Activated CD8-positive, alpha-beta memory T cell treated with anti-CD3 and anti-CD28 coated beads, Interleukin-2, amount 10 ng/mL, durations not matched to agents 7 days and 5 days (primary cell): ENCODE measurements at regions of chr2 and their contacts with region 1.

Region 1: DNA sequence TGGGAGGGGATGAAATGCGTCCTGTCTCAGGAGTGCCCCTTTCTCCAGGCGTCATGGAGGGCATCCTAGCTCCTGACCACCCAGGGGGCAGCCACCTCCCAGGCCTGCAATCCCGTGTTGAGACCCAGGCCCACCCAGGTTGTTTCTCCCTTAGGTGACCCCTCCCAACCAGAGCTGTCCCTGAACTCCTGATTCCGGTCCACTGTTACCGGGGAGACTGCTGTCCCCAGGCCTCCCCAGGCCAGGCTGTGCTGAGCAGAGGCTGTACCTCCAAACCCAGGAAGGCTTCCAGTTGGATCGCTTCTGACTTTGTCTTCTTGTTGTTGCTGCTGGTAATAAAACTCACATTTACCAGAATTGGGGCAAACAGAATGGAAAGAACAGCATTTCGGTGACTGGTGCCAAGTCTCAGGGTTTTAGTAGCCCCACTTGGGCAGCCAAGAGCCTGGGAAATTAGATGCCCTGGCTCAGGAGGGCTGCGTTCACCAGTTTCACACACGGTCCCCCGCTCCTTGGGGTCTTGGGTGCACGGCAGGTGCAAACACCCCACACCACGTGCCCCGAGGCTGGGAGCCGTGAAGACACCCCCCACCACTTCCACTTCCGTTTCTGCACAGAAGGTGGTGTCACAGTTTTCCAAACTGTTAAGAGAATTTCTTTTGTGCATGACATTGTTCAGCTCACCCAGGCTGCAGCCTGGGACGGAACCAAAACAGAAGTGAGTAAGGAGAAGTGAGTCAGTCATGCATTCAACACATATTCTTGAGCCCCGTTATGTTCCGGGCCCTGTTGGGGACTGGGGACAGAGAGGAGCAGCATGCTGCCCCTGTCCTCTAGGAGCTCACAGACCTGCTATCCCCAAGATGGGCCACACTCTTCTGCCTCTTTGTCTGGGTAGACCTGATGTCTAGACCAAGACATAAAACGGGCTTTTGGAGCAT is 29.4 kb downstream of the ITM2C start:
- DNase-seq: no peak
- ATAC-seq: peak; percentile 49
- H3K4me3 Mint-ChIP-seq: no peak overlapping the region
- H3K27ac Mint-ChIP-seq: peak overlapping the region; percentile 17
- H3K4me1 Mint-ChIP-seq: peaks cover 46% of the 10 kb centered on the region
- H3K27me3 Mint-ChIP-seq: peaks cover 46% of the 10 kb centered on the region

Region 2: DNA sequence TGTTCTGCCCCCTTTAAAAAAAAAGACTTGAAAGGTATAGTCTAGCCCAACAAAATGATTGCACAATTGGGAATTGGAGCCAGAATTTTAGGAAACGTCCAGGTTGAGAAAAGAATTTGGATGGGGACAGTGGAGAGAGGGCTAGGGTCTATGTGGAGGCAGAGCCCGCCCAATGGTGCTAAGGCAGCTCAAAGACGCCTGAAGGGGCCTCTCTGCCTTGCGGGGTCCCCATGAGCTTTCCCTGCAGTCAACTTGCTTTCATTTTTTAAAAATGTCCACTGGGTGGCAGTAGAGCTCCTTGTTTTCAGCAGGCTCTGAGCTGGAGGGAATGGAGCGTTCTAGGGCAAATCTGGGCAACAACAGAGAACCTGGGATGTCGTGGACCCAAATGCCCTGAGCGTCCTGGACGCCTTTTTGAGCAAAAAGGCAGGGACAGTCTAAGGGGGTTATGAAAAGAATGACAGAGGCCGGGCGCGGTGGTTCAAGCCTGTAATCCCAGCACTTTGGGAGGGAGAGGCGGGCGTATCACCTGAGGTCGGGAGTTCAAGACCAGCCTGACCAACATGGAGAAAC is 69.6 kb before region 1 on chr2:
- CTCF ChIA-PET with region 1: interaction called, 10 read pairs
- DNase-seq: peak; percentile 71
- ATAC-seq: peak; percentile 82
- H3K4me3 Mint-ChIP-seq: peak overlapping the region; percentile 37
- H3K27ac Mint-ChIP-seq: peak overlapping the region; percentile 60
- H3K4me1 Mint-ChIP-seq: peaks cover 11% of the 10 kb centered on the region
- H3K27me3 Mint-ChIP-seq: peaks cover 36% of the 10 kb centered on the region